Activated T-helper 2 cell treated with anti-CD3 and anti-CD28 coated beads, Interferon-gamma antibody, Interleukin-2, Interleukin-4, amounts not matched to agents 10 μg/mL and 5 μg/mL and 100 μg/mL, durations not matched to agents 14 hours and 24 hours and 36 hours (primary cell): ENCODE measurements at regions of chr4 and their contacts with region 1.

Region 1: DNA sequence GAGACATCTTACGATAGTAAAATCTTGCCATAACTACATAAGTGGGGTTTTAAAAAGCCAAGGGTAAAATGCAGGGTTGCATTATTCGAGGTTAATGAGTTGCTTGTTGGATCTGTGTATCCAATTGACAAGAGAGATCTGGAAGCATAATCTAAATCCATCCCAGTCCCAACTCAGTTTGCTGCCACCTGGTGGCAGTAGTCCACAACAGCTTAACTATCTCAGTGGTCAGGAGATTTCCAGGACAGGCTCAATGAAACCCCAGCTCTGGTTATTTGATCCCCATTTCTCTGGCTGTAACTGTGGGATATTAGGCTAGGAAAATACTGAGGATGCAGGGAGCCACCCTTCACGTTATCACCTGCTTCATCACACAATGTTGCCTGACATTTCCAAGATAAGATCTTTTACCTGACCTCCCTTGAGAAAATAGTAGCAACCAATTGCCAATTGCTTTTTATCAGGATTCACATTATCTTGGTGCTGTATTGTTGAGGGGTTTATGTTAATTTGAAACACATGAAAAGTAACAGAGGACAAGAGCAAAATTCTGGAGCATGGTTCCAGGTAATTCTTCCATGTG is 88.2 kb upstream of the TNIP3 start:
- DNase-seq: peak; percentile 28
- H3K4me3 Mint-ChIP-seq: no peak overlapping the region
- H3K27ac Mint-ChIP-seq: no peak overlapping the region
- H3K4me1 Mint-ChIP-seq: peaks cover 55% of the 10 kb centered on the region
- H3K27me3 Mint-ChIP-seq: peaks cover 1% of the 10 kb centered on the region

Region 2: GRCh38 chr4:121041307-121042090 is 210.8 kb before region 1 on chr4:
- intact Hi-C with region 1: loop called (anchors 1 kb)
- DNase-seq: peak; percentile 16
- H3K4me3 Mint-ChIP-seq: no peak overlapping the region
- H3K27ac Mint-ChIP-seq: no peak overlapping the region
- H3K4me1 Mint-ChIP-seq: peaks cover 13% of the 10 kb centered on the region
- H3K27me3 Mint-ChIP-seq: peaks cover 46% of the 10 kb centered on the region

Region 3: GRCh38 chr4:121154103-121154515 is 98.2 kb before region 1 on chr4:
- intact Hi-C with region 1: loop called (anchors 1 kb)
- DNase-seq: peak; percentile 21
- H3K4me3 Mint-ChIP-seq: peak overlapping the region; percentile 56
- H3K27ac Mint-ChIP-seq: peak overlapping the region; percentile 51
- H3K4me1 Mint-ChIP-seq: peaks cover 56% of the 10 kb centered on the region
- H3K27me3 Mint-ChIP-seq: peaks cover 22% of the 10 kb centered on the region

Region 4: DNA sequence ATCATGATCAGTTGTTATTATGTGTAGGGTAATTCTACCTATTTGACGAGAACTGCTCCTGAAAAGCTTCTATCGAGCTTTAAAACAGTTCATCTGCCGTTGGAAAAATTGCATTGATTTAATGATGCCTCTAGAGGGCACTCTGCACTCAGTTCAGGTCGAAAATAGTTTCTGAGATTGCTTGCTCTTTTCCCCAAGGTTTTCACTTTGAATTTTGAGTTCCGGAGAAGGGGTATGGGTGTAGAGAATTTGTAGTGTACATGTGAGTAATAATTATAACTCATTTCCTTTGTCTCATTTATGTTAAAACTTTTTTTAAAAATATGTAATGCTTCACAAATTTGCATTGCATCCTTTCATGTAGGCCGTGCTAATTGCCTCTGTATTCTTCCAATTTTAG is 59.8 kb before region 1 on chr4:
- intact Hi-C with region 1: loop called (anchors 1 kb)
- DNase-seq: no peak
- H3K4me3 Mint-ChIP-seq: peak overlapping the region; percentile 55
- H3K27ac Mint-ChIP-seq: no peak overlapping the region
- H3K4me1 Mint-ChIP-seq: peaks cover 52% of the 10 kb centered on the region
- H3K27me3 Mint-ChIP-seq: no peaks in the 10 kb centered on the region

Region 5: GRCh38 chr4:121272526-121272925 is 20.2 kb after region 1 on chr4:
- intact Hi-C with region 1: no loop called
- DNase-seq: no peak
- H3K4me3 Mint-ChIP-seq: no peak overlapping the region
- H3K27ac Mint-ChIP-seq: no peak overlapping the region
- H3K4me1 Mint-ChIP-seq: peaks cover 17% of the 10 kb centered on the region
- H3K27me3 Mint-ChIP-seq: peaks cover 23% of the 10 kb centered on the region

Region 6: GRCh38 chr4:121307445-121308327 is 55.4 kb after region 1 on chr4:
- intact Hi-C with region 1: loop called (anchors 1 kb)
- DNase-seq: peak; percentile 31
- H3K4me3 Mint-ChIP-seq: no peak overlapping the region
- H3K27ac Mint-ChIP-seq: no peak overlapping the region
- H3K4me1 Mint-ChIP-seq: peaks cover 24% of the 10 kb centered on the region
- H3K27me3 Mint-ChIP-seq: peaks cover 20% of the 10 kb centered on the region